ENCODE measurements at regions of chr5 and their contacts with region 1.

Region 1: DNA sequence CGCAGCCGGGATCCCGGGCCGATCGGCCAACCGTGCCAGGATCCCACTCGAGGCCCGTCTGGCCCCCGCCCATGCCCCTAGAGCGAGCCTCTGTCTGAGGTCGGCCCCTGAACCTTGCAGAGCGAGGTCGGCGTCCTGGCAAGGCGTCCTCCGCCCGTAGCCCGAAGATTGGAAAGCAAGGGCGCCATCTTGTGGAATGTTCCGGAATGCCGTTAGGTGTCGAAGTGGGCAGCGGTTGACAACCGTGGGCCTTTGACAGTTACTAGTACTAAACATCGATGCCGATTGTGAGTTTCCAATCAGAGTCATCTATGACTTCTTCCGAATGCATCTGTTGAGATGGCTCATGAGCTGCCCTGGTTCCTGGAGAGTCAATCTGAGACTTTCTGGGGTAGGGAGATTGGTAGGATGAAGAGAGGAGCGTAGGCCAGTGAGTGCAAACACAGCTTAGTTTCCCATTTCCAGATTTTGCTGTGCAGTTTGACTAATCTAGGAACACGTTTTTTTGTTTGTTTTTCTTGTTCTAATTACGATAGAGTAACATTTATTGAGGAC is 923 bp upstream of the PLK2 start:
- DNase-seq: peak; percentile 33
- H3K4me3 ChIP-seq: peak overlapping the region; percentile 87 to 94 (median 90)
- H3K27ac ChIP-seq: peak overlapping the region; percentile 95 to 99 (median 96)
- H3K4me1 ChIP-seq: peaks cover 3 to 49% (median 10%) of the 10 kb centered on the region in 3 donors
- H3K27me3 ChIP-seq: no peaks in the 10 kb centered on the region
- CTCF ChIP-seq: peak; percentile 57 to 90 (median 78)
- POLR2A ChIP-seq: no peak

Region 2: DNA sequence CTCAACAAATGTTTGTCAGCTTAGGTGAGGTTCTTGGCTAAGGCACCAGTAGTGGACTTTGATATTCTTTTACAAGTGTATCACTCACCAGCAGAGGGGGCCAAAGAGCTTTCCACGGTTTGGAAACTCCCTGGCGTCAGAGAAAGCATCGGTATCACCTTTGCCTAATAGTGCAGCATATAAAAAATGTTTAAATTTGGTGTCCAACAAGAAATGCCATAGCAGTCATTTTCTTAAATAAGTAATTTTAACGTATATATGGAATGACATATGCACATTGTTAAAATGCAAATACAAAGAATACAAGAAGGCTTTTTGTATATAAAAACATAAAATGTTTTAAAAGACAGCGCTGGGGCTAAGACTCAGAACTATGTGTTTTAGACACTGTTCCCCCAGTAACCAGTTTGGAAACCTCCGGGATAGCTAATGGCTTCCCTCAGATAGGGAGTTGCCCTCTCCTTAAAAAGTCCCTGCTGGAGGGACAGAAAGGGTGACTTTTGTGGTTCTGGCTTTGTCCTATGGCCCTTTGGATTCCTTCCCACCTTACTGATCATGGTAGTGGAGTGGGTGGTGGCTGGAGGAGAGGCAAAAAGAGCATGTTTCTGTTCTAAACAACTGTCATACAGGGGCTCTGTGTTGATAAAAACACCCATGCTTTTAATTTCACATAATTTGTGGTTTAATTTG is 1162.4 kb before region 1 on chr5:
- intact Hi-C with region 1: loop called (anchors 5 kb)
- DNase-seq: no peak
- H3K4me3 ChIP-seq: peak overlapping the region in 1 of 4 donors; percentile 42
- H3K27ac ChIP-seq: peak overlapping the region in 1 of 4 donors; percentile 60
- H3K4me1 ChIP-seq: peaks cover 5 to 11% (median 7%) of the 10 kb centered on the region in 3 donors
- H3K27me3 ChIP-seq: no peaks in the 10 kb centered on the region
- CTCF ChIP-seq: peak; percentile 62 to 82 (median 78)
- POLR2A ChIP-seq: no peak

Region 3: GRCh38 chr5:57499262-57500050 is 961.4 kb before region 1 on chr5:
- intact Hi-C with region 1: loop called (anchors 10 kb)
- DNase-seq: no peak
- H3K4me3 ChIP-seq: peak overlapping the region in 3 of 4 donors; percentile 6 to 52 (median 16)
- H3K27ac ChIP-seq: no peak overlapping the region
- H3K4me1 ChIP-seq: peaks cover 0 to 25% (median 9%) of the 10 kb centered on the region in 3 donors
- H3K27me3 ChIP-seq: no peaks in the 10 kb centered on the region
- CTCF ChIP-seq: peak in 5 of 6 experiments; percentile 44 to 72 (median 59)
- POLR2A ChIP-seq: no peak

Region 4: DNA sequence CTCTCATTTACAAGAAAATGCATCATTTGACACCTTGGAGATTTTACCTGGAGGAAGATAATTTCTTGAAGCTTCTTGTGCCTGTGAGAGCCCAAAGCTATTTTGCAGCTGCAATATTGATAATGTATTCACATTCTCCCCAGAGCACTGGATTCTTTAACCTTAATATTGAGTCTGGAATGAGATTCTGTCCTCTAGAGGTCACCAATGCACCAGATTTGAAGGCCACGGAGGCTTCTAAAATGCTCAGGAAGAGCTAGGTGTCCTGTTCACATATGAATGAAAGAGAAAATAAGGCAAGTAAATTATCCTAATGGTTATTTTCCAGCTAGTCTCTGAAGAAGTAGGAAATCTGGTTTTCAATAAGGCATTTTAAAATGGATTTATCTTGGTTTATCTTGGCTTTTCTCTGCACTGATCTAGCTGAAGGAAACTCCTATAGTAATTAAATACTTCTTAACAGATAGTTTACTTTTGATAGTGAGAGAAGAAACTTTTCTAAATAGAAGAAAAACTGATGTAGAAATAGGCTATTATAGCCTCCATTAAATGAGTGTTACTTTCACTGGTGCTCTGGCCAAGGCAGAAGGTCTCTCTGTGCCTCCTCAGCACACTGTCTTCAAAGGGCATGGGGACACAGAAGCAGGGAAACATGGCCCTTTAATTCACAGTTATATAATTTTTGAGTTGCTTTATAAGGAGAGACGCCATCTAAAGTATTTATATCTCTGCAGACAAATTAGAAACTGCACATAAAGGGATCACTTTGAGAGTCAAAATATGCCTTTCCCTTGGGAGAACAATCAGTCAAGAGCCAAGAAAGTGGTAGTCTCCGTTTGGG is 681.2 kb before region 1 on chr5:
- intact Hi-C with region 1: loop called (anchors 5 kb)
- DNase-seq: no peak
- H3K4me3 ChIP-seq: no peak overlapping the region
- H3K27ac ChIP-seq: peak overlapping the region in 2 of 4 donors; percentile 10 to 47
- H3K4me1 ChIP-seq: peaks cover 0 to 30% (median 2%) of the 10 kb centered on the region in 3 donors
- H3K27me3 ChIP-seq: no peaks in the 10 kb centered on the region
- CTCF ChIP-seq: peak in 5 of 6 experiments; percentile 41 to 72 (median 55)
- POLR2A ChIP-seq: no peak

Region 5: DNA sequence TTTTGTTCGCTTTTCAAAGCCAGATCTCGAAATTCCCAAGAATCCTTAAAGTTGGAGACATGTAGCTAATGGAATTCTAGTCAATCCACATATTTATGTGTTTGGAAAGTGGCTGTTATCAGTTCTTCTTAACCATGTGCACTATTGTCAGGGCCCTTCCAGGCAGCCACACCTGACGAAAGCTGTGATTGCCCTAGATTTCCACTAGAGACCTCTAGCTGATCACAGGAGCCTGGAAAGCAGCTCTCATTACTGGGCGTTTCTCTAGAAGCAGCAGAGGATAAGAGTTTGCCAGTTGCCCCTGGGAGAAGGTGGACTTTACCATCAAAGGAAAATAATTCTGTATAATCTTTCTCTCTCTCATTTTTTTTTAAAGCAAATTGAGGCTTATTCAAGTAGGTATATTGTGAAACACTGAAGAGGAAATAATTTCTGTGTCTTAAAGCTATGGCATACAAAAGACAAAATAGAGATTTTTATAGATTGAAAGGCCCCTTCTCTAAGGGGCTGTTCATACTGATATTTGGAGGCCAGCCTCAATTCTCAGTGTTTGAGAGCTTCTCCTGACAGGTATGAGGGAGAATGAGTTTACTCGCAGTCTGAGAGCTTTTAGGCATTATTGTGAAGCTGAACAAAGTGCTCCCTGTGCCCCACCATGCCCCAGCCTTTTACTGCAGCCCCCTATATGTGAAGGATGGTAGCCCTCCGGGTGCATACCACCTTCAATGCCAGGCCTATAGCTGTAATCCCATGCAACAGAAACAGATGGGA is 572.8 kb before region 1 on chr5:
- intact Hi-C with region 1: loop called (anchors 5 kb)
- DNase-seq: no peak
- H3K4me3 ChIP-seq: no peak overlapping the region
- H3K27ac ChIP-seq: no peak overlapping the region
- H3K4me1 ChIP-seq: peaks cover 0 to 19% (median 9%) of the 10 kb centered on the region in 3 donors
- H3K27me3 ChIP-seq: no peaks in the 10 kb centered on the region
- CTCF ChIP-seq: peak in 5 of 6 experiments; percentile 38 to 84 (median 64)
- POLR2A ChIP-seq: no peak

Measured in esophagus squamous epithelium (tissue), 5 donors.